Endothelial cell of umbilical vein (primary cell): ENCODE measurements at regions of chr12 and their contacts with region 1.

Region 1: GRCh38 chr12:12736759-12737676 is 19.9 kb downstream of the CDKN1B start:
- DNase-seq: peak; percentile 67
- H3K4me3 ChIP-seq: no peak overlapping the region
- H3K27ac ChIP-seq: peak overlapping the region; percentile 39
- H3K4me1 ChIP-seq: peaks cover 13% of the 10 kb centered on the region
- H3K27me3 ChIP-seq: no peaks in the 10 kb centered on the region
- CTCF ChIP-seq: peak; percentile 44 to 49
- POLR2A ChIP-seq: no peak

Region 2: DNA sequence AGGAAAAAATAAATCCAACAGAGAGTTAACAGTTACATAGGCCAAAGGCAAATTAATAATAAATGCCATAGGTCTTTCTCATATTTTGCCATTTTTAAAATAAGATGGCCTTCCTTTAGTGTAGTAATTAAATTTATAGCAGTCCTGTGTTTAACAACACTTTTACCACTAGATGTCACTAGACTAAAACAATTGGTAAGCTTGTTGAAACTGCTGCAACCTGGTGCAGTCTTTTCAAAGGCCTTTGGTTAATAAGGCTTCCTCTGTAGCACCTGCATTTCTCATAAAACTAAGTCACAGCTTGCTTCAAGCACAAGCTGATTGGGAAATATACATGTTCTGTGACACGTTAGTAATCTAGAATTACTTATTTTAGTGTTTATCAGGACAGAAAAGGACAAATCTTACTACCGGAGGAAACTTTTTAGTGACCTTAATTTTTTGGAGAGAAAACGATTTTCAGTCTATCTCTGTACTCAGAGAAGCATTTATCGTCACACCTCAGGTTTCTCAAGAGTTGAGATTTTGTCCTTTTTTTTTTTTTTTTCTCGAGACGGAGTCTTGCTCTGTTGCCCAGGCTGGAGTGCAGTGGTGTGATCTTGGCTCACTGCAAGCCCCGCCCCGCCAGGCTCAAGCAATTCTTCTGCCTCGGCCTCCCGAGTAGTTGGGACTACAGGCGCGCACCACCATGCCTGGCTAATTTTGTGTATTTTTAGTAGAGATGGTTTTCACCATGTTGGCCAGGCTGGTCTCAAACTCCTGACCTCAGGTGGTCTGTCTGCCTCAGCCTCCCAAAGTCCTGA is 360.2 kb before region 1 on chr12:
- CTCF ChIA-PET with region 1: interaction called, 35 read pairs
- POLR2A ChIA-PET with region 1: no interaction called
- dilution Hi-C with region 1: no loop called
- intact Hi-C with region 1: loop called (anchors 1 kb)
- DNase-seq: peak; percentile 73
- H3K4me3 ChIP-seq: no peak overlapping the region
- H3K27ac ChIP-seq: no peak overlapping the region
- H3K4me1 ChIP-seq: no peaks in the 10 kb centered on the region
- H3K27me3 ChIP-seq: no peaks in the 10 kb centered on the region
- CTCF ChIP-seq: peak; percentile 43 to 44
- POLR2A ChIP-seq: no peak

Region 3: DNA sequence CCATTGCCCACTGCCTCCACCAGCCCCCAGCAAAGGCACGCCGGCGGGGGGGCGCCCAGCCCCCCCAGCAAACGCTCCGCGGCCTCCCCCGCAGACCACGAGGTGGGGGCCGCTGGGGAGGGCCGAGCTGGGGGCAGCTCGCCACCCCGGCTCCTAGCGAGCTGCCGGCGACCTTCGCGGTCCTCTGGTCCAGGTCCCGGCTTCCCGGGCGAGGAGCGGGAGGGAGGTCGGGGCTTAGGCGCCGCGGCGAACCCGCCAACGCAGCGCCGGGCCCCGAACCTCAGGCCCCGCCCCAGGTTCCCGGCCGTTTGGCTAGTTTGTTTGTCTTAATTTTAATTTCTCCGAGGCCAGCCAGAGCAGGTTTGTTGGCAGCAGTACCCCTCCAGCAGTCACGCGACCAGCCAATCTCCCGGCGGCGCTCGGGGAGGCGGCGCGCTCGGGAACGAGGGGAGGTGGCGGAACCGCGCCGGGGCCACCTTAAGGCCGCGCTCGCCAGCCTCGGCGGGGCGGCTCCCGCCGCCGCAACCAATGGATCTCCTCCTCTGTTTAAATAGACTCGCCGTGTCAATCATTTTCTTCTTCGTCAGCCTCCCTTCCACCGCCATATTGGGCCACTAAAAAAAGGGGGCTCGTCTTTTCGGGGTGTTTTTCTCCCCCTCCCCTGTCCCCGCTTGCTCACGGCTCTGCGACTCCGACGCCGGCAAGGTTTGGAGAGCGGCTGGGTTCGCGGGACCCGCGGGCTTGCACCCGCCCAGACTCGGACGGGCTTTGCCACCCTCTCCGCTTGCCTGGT is 20.0 kb before region 1 on chr12 and contains the start of gene CDKN1B:
- CTCF ChIA-PET with region 1: interaction called, 159 read pairs
- POLR2A ChIA-PET with region 1: no interaction called
- dilution Hi-C with region 1: no loop called
- intact Hi-C with region 1: loop called (anchors 1 kb)
- DNase-seq: peak; percentile 98
- H3K4me3 ChIP-seq: peak within 1 kb of the TSS; percentile 67 to 99 (median 95)
- H3K27ac ChIP-seq: peak within 1 kb of the TSS; percentile 98
- H3K4me1 ChIP-seq: peaks cover 49% of the 10 kb centered on the region
- H3K27me3 ChIP-seq: no peaks in the 10 kb centered on the region
- CTCF ChIP-seq: no peak
- POLR2A ChIP-seq: peak; percentile 79
- total RNA-seq, gene CDKN1B: 32.0 and 40.8 TPM in 2 replicates

Region 4: DNA sequence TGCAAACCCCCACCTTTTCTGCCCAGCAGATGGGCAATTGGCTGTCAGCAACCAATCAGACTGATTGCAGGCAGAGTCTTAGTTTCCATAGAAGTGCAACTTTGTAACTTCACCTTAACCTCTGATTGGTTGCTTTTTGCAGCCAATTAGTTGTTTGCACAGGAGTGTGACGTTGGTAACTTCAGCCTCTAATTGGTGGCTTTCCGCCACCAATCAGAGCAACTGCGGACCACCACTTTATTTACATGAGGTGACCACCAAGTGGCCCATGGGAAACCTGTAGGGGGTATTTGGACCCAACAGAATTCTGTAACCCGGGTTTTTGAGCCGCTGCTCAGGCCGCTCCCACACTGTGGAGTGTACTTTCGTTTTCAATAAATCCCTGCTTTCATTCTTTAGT is 12.4 kb after region 1 on chr12:
- CTCF ChIA-PET with region 1: interaction called, 48 read pairs
- POLR2A ChIA-PET with region 1: no interaction called
- dilution Hi-C with region 1: no loop called
- intact Hi-C with region 1: no loop called
- DNase-seq: no peak
- H3K4me3 ChIP-seq: no peak overlapping the region
- H3K27ac ChIP-seq: no peak overlapping the region
- H3K4me1 ChIP-seq: no peaks in the 10 kb centered on the region
- H3K27me3 ChIP-seq: no peaks in the 10 kb centered on the region
- CTCF ChIP-seq: no peak
- POLR2A ChIP-seq: no peak

Region 5: DNA sequence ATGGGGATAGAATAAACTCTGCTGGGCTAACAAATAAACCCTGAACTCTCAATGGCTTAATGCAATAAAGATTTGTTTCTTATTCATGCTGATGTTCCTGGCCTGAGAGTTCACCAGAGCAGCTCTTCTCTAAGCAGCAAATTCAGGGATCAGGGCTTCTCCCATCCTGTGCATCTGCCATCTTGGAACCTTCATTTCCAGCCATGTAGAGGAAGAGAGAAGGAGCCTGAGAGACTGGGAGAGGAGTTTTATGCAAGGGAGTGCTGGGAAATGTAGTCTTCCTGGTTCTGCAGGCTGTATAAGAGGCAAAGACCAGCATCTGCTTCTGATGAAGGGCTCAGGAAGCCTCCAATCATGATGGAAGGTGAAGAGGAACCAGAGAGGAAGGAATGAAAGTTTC is 27.8 kb after region 1 on chr12:
- CTCF ChIA-PET with region 1: interaction called, 11 read pairs
- POLR2A ChIA-PET with region 1: no interaction called
- dilution Hi-C with region 1: no loop called
- intact Hi-C with region 1: no loop called
- DNase-seq: no peak
- H3K4me3 ChIP-seq: no peak overlapping the region
- H3K27ac ChIP-seq: no peak overlapping the region
- H3K4me1 ChIP-seq: no peaks in the 10 kb centered on the region
- H3K27me3 ChIP-seq: no peaks in the 10 kb centered on the region
- CTCF ChIP-seq: no peak
- POLR2A ChIP-seq: no peak

Region 6: DNA sequence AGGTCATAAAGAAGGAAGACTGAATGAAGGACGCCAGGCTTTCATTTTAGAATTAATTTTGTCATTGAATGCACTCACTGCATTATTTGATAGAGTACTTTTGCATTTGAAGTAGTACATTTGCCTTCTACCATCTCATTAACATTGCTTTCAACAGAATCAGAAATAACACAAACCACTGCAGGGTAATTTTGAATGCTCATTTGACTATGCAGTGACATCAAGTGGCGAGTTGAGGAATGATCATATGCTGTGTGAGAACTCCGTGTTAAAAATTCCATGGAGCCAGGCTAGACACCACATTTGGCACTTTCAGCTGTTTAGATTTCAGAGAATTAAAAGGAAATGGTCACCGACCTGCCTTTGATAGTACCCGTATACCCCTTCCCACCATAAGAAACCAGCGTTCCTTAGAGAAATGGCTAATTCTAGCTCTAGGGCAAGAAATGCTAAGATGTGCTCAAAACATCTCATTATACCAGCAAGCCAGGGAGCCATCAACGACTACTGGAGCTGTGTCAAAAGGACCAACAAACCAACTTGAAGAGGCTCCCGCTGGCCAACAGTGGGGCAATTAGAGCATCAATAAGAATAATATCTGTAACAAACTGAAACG is 246.5 kb after region 1 on chr12:
- CTCF ChIA-PET with region 1: interaction called, 15 read pairs
- POLR2A ChIA-PET with region 1: no interaction called
- dilution Hi-C with region 1: no loop called
- intact Hi-C with region 1: no loop called
- DNase-seq: peak; percentile 78
- H3K4me3 ChIP-seq: no peak overlapping the region
- H3K27ac ChIP-seq: peak overlapping the region; percentile 25
- H3K4me1 ChIP-seq: peaks cover 20% of the 10 kb centered on the region
- H3K27me3 ChIP-seq: no peaks in the 10 kb centered on the region
- CTCF ChIP-seq: peak; percentile 56 to 60
- POLR2A ChIP-seq: no peak